H1 (cell line): ENCODE measurements at regions of chr22 and their contacts with region 1.

Region 1: DNA sequence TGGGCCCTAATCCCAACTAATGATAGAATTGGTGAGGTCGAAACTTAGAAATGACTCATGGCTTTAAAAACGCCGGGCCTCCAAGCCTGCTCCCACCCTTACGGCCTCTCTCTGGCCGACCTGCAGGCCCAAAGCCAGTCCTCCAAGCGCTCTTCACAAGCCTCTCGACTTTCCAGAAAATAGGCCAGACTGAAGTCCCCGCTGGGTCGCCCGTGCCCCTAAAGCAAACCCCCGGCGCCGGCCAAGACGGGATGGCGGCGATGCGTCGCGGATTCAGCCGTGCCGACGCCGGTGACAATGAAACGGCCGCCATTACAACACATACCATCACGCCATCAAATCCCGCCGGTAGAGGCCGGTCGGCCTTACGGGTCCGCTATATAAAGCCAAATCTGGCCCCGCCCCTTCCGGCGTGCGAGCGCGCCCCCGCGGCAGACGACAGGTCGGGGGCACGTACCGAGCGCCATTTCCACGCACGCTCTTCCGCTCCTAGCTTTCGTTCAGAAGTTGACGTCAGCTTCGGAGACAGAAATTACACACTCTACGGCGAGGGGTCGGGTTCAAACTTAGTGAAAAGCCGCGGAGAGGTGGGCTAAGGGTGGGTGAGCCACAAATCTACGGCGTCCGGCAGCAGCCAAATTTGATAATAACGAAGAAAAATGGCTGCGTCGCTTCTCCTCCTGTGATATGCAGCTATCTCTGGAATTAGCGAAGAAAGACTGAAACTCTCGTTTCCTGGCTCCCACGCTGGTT is at the start of gene RPL3:
- DNase-seq: peak; percentile 90 to 99
- H3K4me3 ChIP-seq: peak within 1 kb of the TSS; percentile 95 to 99 (median 98)
- H3K27ac ChIP-seq: peak within 1 kb of the TSS; percentile 97
- H3K4me1 ChIP-seq: peaks cover 0 to 15% (median 3%) of the 10 kb centered on the region in 4 experiments; a peak in 6 of 7 replicates
- H3K27me3 ChIP-seq: no peaks in the 10 kb centered on the region
- CTCF ChIP-seq: peak in 2 of 3 experiments; percentile 5 to 12; a peak in 3 of 4 replicates
- EP300 ChIP-seq: peak in 1 of 2 experiments; percentile 46; a peak in 1 of 3 replicates
- POLR2A ChIP-seq: peak; percentile 99 to 100
- RAD21 ChIP-seq: no peak
- total RNA-seq, gene RPL3: 2,801 and 2,865 TPM in 2 replicates

Region 2: DNA sequence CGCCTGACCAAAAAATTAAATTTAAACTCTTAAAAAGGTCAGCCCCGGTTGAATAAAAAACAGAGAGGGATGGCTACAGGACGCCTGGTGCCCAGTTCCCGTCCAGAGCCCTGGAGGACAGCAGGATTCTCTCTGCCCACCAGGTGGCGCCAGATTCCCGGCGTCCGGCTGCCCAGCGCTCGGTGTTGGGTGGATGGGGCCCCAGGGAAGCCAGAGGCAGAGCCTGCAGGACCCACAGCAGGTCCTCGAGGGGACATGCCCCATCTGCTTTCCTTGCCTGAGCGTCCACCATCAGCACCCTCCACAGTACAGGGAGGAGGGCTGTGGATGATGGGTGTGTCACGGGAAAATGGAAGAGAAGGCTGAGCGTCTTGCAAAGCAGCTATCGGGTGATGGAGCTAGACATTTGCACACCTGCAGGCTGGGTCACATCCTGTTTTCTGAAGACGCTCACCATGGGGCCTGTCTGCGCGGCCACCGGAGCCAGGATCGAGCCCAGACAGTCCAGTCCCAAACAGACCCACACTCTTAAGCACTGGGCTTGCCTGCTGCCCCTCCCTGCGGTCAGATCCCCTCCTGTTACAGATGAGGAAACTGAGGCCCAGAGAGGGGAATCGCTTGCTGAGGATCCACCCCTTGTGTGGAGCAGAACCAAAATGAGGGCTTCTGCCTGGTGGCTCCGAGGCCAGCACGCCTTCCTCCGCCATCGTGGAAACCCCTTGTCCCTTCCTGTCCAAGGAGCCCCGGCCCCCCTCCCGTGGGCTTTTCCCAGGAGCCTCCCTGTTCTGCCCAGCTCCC is 148.4 kb before region 1 on chr22:
- CTCF ChIA-PET with region 1: interaction called, 37 read pairs
- POLR2A ChIA-PET with region 1: interaction called, 313 read pairs
- DNase-seq: peak in 1 of 2 experiments; percentile 98
- H3K4me3 ChIP-seq: no peak overlapping the region
- H3K27ac ChIP-seq: no peak overlapping the region; the same call in 1 of the 2 replicates
- H3K4me1 ChIP-seq: peaks cover 15 to 42% (median 35%) of the 10 kb centered on the region in 4 experiments
- H3K27me3 ChIP-seq: no peaks in the 10 kb centered on the region
- CTCF ChIP-seq: peak; percentile 88 to 95 (median 89)
- EP300 ChIP-seq: no peak
- POLR2A ChIP-seq: no peak
- RAD21 ChIP-seq: peak; percentile 97 to 99

Region 3: GRCh38 chr22:39230261-39231196 is 88.9 kb before region 1 on chr22:
- CTCF ChIA-PET with region 1: interaction called, 8 read pairs
- POLR2A ChIA-PET with region 1: interaction called, 89 read pairs
- DNase-seq: peak in 1 of 2 experiments; percentile 81
- H3K4me3 ChIP-seq: peak overlapping the region in 1 of 4 experiments; percentile 27; a peak in 3 of 8 replicates
- H3K27ac ChIP-seq: no peak overlapping the region
- H3K4me1 ChIP-seq: peaks cover 4 to 42% (median 31%) of the 10 kb centered on the region in 4 experiments
- H3K27me3 ChIP-seq: peaks cover 0 to 19% (median 6%) of the 10 kb centered on the region in 4 experiments; a peak in 5 of 7 replicates
- CTCF ChIP-seq: peak; percentile 0 to 40 (median 20); a peak in 2 of 4 replicates
- EP300 ChIP-seq: no peak
- POLR2A ChIP-seq: no peak
- RAD21 ChIP-seq: no peak; a peak in 1 of 4 replicates

Region 4: DNA sequence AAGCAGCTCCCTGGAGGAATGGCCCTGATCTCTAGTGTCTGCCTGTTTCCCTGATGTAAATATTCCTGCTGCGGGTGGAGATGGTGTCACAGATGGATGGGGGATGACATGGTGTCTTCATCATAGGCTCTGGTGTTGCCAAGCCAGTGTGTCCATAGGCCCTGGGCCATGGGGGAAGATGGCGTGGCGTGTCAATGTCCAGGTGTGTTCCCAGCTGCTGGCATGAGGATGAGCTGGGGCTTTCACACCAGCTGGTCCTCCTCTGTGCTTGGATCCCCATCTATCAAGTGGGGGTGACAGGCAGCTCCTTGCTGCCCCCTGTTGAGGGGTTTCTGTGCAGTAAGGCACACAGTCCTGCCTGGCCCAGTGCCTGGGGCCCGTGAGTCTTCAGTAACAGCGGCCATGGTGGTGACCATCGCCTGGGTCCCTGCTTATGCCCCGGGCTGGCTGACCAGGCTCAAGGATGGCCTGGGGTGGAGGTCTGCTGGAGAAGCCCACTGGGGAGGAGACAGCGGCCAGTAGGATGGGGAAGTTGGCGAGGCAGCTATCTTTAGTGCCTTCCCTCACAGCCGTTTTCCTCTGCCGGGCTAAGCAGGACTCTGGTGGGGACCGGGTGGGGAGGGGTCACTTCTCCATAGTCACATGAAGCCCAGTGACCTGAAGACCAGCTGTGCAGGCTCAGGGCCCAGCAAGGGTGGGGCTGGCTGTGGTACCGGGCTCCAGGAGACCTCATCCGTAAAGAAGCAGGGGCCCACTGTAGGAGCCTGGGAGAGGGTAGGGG is 12.7 kb before region 1 on chr22:
- CTCF ChIA-PET with region 1: interaction called, 32 read pairs
- POLR2A ChIA-PET with region 1: interaction called, 692 read pairs
- DNase-seq: peak in 1 of 2 experiments; percentile 83
- H3K4me3 ChIP-seq: no peak overlapping the region
- H3K27ac ChIP-seq: no peak overlapping the region
- H3K4me1 ChIP-seq: peaks cover 0 to 14% (median 11%) of the 10 kb centered on the region in 4 experiments; a peak in 5 of 7 replicates
- H3K27me3 ChIP-seq: no peaks in the 10 kb centered on the region
- CTCF ChIP-seq: peak; percentile 82 to 86 (median 83)
- EP300 ChIP-seq: no peak
- POLR2A ChIP-seq: no peak
- RAD21 ChIP-seq: peak; percentile 84 to 87

Region 5: DNA sequence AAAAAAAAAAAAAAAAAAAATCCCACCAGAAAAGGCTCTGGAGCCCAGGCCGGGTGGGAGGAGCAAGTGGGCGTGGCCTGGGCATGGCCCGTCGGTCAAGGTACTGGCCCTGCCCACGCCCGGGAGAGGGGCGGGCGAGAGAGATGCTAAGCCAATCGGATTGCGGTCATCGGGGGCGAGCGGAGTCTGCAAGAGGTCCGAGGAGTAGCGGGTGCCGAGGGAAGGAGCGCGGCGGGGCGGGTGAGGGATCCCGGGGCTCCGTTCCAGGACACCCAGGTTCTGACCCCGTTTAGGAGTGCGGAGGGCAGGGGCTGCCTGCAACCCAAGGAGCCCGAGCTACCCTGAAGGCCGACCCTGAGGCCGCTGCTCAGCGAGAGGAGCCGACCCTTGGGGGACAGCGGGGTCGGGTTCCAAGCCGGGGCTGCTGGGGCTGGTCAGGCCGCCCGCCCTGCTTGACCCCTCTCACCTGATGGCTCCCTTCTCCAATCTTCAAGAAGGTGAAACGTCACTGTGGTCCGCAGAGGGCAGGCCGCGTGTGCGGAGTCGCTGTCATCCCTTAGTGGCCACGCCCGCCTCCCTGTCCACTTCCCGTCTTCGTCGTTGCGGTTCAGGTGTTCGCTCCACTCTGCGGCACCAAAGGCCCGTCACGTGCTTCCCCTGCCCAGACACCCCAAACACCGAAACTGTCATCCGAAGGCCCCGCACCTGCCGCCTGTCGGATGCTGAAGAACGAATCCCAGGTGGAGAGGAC is 69.0 kb after region 1 on chr22:
- CTCF ChIA-PET with region 1: no interaction called
- POLR2A ChIA-PET with region 1: interaction called, 25 read pairs
- DNase-seq: peak; percentile 87 to 94
- H3K4me3 ChIP-seq: peak overlapping the region; percentile 33 to 65 (median 57)
- H3K27ac ChIP-seq: no peak overlapping the region
- H3K4me1 ChIP-seq: peaks cover 0 to 8% (median 0%) of the 10 kb centered on the region in 4 experiments; a peak in 3 of 7 replicates
- H3K27me3 ChIP-seq: peaks cover 0 to 12% (median 12%) of the 10 kb centered on the region in 4 experiments; a peak in 5 of 7 replicates
- CTCF ChIP-seq: no peak
- EP300 ChIP-seq: no peak
- POLR2A ChIP-seq: no peak
- RAD21 ChIP-seq: no peak

Region 6: GRCh38 chr22:39454385-39454871 is 135.0 kb after region 1 on chr22:
- CTCF ChIA-PET with region 1: no interaction called
- POLR2A ChIA-PET with region 1: interaction called, 13 read pairs
- DNase-seq: no peak
- H3K4me3 ChIP-seq: no peak overlapping the region
- H3K27ac ChIP-seq: no peak overlapping the region
- H3K4me1 ChIP-seq: peaks cover 0 to 30% (median 20%) of the 10 kb centered on the region in 4 experiments; a peak in 6 of 7 replicates
- H3K27me3 ChIP-seq: peaks cover 5 to 24% (median 18%) of the 10 kb centered on the region in 4 experiments; a peak in 6 of 7 replicates
- CTCF ChIP-seq: no peak
- EP300 ChIP-seq: no peak
- POLR2A ChIP-seq: no peak
- RAD21 ChIP-seq: no peak

Region 7: DNA sequence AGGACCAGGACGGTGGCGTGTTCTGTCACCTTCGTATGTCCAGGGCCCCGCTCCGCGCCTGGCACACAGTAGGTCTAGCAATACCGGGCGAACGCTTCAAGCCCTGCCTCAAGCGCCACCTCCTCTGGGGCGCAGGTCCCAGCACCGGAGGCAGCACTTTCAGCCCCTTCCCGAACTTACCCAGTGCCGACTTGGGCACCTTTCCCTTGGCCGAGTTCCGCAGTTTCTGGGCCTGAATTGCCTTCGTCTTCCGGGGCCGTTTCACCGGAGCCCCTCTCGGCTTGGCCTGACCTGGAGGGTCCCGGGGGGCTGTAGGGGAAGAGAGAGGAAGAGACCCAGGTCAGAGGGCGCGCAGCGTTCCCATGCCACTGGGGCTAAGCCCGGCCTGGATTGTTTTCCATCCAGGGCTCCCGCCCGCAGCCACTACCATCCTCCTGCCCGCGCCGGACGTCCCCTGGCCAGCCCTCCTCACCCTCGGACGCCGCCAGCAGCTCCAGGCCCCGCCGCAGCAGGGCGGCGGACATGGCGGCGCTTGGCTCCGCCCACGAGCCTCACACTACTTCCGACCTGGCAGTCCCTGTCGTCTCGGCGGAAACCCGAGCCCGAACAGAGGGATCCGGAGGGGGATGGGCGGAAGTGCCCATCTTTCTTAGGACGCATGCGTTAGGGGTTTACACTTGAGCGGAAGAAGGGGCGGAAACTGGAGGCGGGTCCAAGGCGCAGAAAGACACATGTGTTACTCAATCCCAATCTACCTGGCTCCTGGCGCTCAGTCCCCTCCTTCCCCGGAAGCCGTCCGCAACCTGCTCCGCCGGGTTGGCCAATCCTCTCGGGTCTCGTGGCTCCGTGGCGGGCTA is 213.0 kb after region 1 on chr22 and contains the start of gene RPS19BP1:
- CTCF ChIA-PET with region 1: interaction called, 13 read pairs
- POLR2A ChIA-PET with region 1: interaction called, 13 read pairs
- DNase-seq: peak; percentile 94 to 100
- H3K4me3 ChIP-seq: peak within 1 kb of the TSS; percentile 73 to 97 (median 96)
- H3K27ac ChIP-seq: peak within 1 kb of the TSS; percentile 67
- H3K4me1 ChIP-seq: peaks cover 12 to 45% (median 25%) of the 10 kb centered on the region in 4 experiments
- H3K27me3 ChIP-seq: no peaks in the 10 kb centered on the region
- CTCF ChIP-seq: no peak
- EP300 ChIP-seq: 0 out of 3 replicates have a peak, but pooled peaks of 1 of the 2 experiments have one; percentile 20
- POLR2A ChIP-seq: peak in 1 of 2 experiments; percentile 77; a peak in 2 of 3 replicates
- RAD21 ChIP-seq: no peak
- total RNA-seq, gene RPS19BP1: 77.5 and 77.9 TPM in 2 replicates